ENCODE measurements at regions of chr9 and their contacts with region 1.

Region 1: DNA sequence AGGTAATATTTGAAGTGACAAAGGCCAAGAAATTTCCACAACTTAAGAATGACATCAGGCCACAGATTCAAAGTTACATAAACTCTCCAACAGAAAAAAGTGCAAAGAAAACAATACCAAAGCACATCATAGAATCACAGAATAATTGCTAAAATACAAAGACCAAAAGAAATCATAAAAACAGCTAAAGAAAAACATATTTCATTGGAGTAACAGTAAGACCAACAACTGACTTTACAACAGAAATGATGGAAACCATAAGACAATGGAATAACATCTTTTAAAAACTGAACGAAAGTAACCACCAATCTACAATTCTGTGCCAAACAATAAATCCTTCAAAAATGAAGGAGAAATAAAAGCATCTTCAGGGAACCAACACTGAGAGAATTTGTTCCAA is 38.3 kb downstream of the ZDHHC21 start:
- DNase-seq: no peak
- ATAC-seq: no peak
- H3K4me3 ChIP-seq: no peak overlapping the region
- H3K27ac ChIP-seq: no peak overlapping the region
- H3K4me1 ChIP-seq: no peaks in the 10 kb centered on the region
- H3K27me3 ChIP-seq: no peaks in the 10 kb centered on the region
- CTCF ChIP-seq: no peak

Region 2: GRCh38 chr9:14466429-14466818 is 188.5 kb before region 1 on chr9:
- CTCF ChIA-PET with region 1: no interaction called
- POLR2A ChIA-PET with region 1: no interaction called
- in situ Hi-C with region 1: no loop called
- intact Hi-C with region 1: loop called (anchors 5 kb)
- DNase-seq: no peak
- ATAC-seq: no peak
- H3K4me3 ChIP-seq: no peak overlapping the region
- H3K27ac ChIP-seq: no peak overlapping the region
- H3K4me1 ChIP-seq: no peaks in the 10 kb centered on the region
- H3K27me3 ChIP-seq: no peaks in the 10 kb centered on the region
- CTCF ChIP-seq: no peak